ENCODE measurements at regions of chr6 and their contacts with region 1.

Region 1: DNA sequence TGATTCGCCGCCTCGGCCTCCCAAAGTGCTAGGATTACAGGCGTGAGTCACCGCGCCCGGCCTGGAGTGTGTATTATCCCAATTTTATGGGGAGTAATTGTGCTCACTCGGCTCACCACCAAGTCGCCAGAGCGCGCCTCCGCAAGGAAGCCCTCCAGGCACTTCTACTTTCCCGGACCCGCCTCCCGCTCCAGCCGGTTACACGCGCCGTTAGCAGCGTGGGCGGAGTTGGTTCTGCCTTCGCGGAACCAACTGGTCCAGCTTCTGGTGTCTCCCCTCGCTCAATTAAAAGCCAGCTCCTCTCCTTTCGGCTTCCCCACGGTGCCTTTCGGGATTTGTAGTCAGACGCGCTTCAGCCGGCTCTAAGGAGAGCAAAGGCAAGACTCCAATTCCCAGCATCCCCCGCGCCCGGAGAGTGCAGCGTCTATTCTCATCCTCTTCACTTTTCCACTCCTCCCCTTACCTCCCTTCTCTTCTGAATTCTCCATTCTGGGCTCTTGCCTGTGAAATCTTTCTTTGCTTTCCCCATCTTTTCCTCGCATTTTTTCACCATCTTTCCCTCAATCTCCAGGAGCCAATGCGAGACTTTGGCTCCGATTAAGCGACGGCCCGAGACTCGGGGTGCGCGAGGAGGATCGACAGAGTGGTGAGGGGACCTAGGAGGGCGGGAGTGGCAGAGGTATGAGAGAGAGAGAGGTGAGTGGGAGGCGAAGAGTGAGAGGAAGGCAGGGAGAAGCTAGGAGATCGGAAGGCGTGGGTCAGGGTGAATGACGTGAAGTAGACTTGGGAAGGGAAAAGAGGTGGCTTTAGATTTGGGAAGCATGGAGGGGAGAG is at the start of gene GTF2H4:
- DNase-seq: peak; percentile 98
- H3K4me3 Mint-ChIP-seq: peak within 1 kb of the TSS; percentile 98
- H3K27ac Mint-ChIP-seq: peak within 1 kb of the TSS; percentile 86
- H3K4me1 Mint-ChIP-seq: peaks cover 26% of the 10 kb centered on the region
- H3K27me3 Mint-ChIP-seq: no peaks in the 10 kb centered on the region
- total RNA-seq, gene GTF2H4: 58.7 and 60.3 TPM in 2 replicates

Region 2: GRCh38 chr6:30443657-30444450 is 464.1 kb before region 1 on chr6:
- intact Hi-C with region 1: no loop called
- DNase-seq: no peak
- H3K4me3 Mint-ChIP-seq: no peak overlapping the region
- H3K27ac Mint-ChIP-seq: no peak overlapping the region
- H3K4me1 Mint-ChIP-seq: peaks cover 3% of the 10 kb centered on the region
- H3K27me3 Mint-ChIP-seq: peaks cover 86% of the 10 kb centered on the region

Region 3: GRCh38 chr6:30616811-30617564 is 291.0 kb before region 1 on chr6 and contains the start of gene PPP1R10:
- intact Hi-C with region 1: no loop called
- DNase-seq: peak; percentile 100
- H3K4me3 Mint-ChIP-seq: peak within 1 kb of the TSS; percentile 90
- H3K27ac Mint-ChIP-seq: peak within 1 kb of the TSS; percentile 92
- H3K4me1 Mint-ChIP-seq: peaks cover 42% of the 10 kb centered on the region
- H3K27me3 Mint-ChIP-seq: peaks cover 6% of the 10 kb centered on the region
- total RNA-seq, gene PPP1R10: 106 and 107 TPM in 2 replicates

Region 4: DNA sequence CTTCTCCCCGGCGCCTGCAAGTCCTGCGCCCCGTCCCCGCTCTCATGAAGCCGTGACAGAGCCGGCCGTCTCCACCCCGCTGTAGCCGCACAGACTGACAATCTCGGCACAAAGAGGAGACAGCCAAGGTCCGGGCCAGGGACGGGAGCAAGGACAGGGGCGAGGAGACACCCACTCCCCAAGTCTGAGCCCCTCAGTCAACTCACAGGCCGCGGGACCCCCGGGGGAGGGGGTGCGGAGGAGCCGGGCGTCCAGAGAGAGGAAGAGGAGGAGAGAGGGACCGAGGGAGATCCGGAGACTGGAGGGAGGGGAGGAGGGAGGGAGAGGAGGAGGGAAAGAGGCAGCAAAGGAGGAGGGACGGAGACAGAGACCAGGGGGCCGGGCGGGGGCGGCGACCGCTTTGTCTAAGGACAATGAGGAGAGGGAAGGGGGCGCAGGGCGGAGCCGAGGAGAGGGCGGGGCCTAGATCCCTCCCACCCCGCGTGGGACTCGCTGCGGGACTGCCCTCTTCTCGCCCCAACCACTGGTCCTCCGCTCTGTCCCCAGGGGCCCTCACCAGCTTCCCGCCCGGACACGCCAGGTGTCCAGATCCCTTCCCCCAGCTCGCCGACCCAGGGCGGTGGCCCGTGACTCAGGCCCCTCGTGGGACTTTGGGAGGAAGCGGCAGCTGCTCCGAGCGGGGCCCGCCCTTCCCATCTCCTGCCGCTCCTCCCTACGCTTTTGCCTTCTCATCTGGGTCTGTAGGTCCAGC is 220.9 kb before region 1 on chr6:
- intact Hi-C with region 1: loop called (anchors 1 kb)
- DNase-seq: peak; percentile 96
- H3K4me3 Mint-ChIP-seq: peak overlapping the region; percentile 94
- H3K27ac Mint-ChIP-seq: peak overlapping the region; percentile 93
- H3K4me1 Mint-ChIP-seq: peaks cover 53% of the 10 kb centered on the region
- H3K27me3 Mint-ChIP-seq: no peaks in the 10 kb centered on the region

Region 5: DNA sequence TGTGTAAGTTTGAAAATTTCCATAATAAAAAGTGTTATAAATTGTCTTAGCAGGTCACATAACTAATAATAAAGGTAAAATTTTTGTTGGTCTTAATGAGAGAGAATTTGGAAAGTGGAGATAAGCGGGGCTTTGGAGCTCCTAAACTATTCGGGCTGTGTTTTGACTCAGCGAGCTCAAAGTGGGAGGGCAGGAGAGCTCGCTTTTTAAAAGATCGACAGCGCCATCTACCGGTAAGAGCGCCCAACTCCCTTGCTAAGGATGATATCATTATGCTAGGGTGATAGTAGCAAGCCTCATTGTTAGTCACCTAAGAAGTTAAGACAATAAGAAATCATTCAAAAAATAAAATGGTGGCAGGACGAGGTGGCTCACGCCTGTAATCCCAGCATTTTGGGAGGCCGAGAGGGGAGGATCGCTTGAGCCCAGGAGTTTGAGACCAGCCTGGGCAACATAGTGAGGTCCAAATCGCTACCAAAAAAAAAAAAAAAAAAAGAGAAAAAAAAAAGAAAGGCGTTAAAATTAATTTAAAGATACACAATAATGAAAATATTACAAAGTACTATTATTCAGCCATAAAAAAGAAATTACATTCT is 179.6 kb after region 1 on chr6:
- intact Hi-C with region 1: no loop called
- DNase-seq: peak; percentile 96
- H3K4me3 Mint-ChIP-seq: no peak overlapping the region
- H3K27ac Mint-ChIP-seq: no peak overlapping the region
- H3K4me1 Mint-ChIP-seq: peaks cover 11% of the 10 kb centered on the region
- H3K27me3 Mint-ChIP-seq: peaks cover 16% of the 10 kb centered on the region